Endothelial cell of umbilical vein (primary cell): ENCODE measurements at regions of chr22 and their contacts with region 1.

Region 1: DNA sequence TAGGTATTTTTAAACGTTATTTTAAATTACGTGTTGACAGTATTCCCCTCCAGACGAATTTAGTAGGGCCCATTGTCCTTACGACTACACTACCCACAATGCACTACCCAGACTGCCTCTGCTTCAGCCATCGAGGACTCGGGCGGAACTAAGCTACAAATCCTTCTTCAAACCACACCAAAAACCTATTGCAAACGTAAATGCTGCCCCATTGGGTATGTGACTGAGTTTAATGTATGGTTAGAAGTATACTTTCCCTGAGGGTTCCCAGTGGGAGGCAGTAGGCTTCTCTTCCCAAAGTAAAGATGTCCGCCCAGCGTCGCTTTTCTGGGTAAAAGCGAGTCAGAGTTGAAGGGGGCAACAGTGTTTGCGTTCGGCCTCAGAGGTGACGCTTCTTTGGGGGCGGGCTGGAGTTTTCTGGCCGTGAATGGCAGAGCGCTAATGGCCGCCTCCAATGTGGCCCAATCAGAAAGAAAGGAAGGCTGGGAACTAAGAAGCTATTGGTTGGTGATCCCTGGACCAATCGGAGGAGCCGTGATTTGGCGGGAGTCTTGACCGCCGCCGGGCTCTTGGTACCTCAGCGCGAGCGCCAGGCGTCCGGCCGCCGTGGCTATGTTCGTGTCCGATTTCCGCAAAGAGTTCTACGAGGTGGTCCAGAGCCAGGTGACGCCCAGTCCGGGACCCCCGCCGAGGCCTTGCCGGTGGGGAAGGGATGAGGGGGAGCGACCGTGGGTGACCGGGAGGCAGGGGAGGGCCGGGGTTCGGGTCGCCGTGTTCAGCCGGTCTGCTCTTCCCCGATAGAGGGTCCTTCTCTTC is at the start of gene CDC45:
- DNase-seq: peak; percentile 99
- H3K4me3 ChIP-seq: peak within 1 kb of the TSS; percentile 66 to 87 (median 83)
- H3K27ac ChIP-seq: peak within 1 kb of the TSS; percentile 100
- H3K4me1 ChIP-seq: peaks cover 48% of the 10 kb centered on the region
- H3K27me3 ChIP-seq: no peaks in the 10 kb centered on the region
- CTCF ChIP-seq: no peak
- POLR2A ChIP-seq: no peak
- total RNA-seq, gene CDC45: 40.6 and 44.7 TPM in 2 replicates

Region 2: DNA sequence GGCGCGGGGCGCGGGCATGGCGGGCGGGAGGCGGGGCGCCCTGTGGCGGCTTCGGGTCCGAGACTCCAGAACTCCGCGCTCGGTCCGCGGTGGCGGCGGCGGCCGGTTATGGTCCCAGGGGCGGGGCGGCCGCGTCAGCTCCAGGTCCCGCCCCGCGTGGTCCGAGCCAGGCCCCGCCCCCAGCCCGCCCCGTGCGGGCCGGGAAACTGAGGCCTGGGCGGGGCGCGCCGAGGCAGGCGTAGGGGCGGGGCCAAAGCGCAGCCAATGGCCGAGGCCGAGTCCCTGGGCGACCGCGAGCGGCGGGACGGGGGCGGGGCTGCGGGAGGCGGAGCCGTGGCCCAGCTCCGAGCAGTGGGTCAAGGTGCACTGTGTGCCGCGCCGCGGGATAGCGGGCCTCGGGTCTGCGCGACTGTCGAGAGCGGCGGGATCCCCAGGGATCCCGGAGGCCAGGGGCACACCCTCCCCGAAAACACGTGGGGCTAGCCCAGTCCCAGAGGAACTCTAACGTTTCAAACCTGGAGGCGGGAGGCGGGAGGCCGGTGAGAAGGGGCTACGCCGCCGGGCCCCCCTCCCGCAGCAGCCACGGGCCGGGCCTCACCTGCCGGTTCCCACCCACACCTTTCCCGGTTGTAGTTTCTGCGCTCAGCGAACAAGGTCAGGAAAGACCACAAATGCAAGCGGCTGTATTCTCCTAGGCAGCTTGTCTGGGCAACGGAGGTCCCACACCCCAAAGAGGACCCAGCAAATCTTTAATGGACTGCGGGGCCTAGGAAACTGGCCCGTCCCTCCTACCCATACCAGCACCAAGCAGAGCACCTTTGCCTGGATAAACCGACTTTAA is 300.7 kb before region 1 on chr22 and contains the start of gene SLC25A1:
- CTCF ChIA-PET with region 1: interaction called, 14 read pairs
- POLR2A ChIA-PET with region 1: no interaction called
- dilution Hi-C with region 1: no loop called
- intact Hi-C with region 1: loop called (anchors 1 kb)
- DNase-seq: peak; percentile 88
- H3K4me3 ChIP-seq: peak within 1 kb of the TSS; percentile 60 to 89 (median 68)
- H3K27ac ChIP-seq: peak within 1 kb of the TSS; percentile 56
- H3K4me1 ChIP-seq: peaks cover 7% of the 10 kb centered on the region
- H3K27me3 ChIP-seq: no peaks in the 10 kb centered on the region
- CTCF ChIP-seq: no peak
- POLR2A ChIP-seq: peak; percentile 31
- total RNA-seq, gene SLC25A1: 94.5 and 102 TPM in 2 replicates

Region 3: DNA sequence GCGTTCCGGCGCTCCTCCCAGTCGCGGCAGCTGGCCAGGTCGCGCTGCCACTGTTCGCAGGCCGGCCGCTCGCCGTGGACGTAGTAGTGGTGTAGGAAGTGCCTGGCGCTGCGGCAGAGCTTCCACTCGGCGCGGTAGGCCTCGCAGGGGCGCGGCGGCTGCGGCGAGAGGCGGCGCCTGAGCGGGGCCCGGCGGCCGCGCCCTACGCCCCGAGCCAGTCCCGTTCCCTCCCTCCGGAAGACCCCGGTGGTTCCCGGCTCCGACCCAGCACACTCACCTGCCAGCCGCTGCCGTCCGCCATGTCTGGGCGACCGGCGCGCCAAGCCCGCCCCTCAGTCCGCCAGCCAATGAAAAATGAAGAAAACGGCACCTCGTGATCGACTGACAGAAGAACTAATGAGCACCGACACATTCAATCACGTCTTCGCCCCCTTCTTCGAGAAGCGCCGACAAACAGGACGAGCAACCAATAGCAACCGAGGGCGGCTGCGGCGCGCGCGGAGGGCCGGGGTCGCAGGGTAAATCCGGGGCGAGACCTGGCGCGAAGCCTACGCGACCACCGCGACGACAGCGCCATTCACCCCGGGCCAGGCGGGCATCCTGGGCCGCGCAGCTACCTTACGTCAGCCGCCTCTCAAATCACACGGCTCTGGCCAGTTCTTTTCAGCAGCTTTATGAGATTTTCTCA is 32.0 kb before region 1 on chr22 and contains the start of gene C22orf39:
- CTCF ChIA-PET with region 1: interaction called, 4 read pairs
- POLR2A ChIA-PET with region 1: no interaction called
- dilution Hi-C with region 1: no loop called
- intact Hi-C with region 1: loop called (anchors 2 kb)
- DNase-seq: peak; percentile 94
- H3K4me3 ChIP-seq: peak within 1 kb of the TSS; percentile 80 to 92 (median 89)
- H3K27ac ChIP-seq: peak within 1 kb of the TSS; percentile 49
- H3K4me1 ChIP-seq: peaks cover 11% of the 10 kb centered on the region
- H3K27me3 ChIP-seq: no peaks in the 10 kb centered on the region
- CTCF ChIP-seq: no peak
- POLR2A ChIP-seq: peak; percentile 77
- total RNA-seq, gene C22orf39: 25.0 and 26.1 TPM in 2 replicates

Region 4: DNA sequence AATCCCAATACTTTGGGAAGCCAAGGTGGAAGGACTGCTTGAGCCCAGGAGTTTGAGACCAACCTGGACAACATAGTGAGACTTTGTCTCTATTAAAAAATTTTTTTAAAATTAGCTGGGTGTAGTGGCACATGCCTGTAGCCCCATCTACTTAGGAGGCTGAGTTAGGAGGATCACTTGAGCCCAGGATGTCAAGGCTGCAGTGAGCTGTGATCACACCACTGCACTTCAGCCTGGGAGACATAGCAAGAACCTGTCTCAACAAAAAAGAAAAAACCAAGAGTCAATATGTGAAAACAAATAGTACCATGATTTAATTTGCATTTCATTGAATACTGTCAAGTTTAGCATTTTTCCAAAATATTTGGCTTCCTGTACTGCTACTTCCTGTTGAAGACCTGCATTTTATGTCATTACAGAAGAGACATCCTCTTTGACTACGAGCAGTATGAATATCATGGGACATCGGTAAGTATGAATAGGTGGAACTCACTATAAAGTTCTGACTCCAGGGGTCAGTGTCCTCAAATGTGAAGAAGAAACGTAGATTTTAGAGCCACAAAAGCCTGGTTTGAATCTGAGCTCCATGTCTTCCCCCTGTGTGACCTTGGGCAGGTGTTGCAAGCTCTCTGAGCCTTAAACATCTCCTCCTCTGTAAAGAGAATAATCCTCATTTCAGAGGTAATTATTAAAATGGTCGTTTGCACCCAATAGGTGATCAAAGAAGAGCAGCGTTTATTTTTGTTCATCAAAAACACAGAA is 16.2 kb after region 1 on chr22:
- CTCF ChIA-PET with region 1: interaction called, 16 read pairs
- POLR2A ChIA-PET with region 1: no interaction called
- dilution Hi-C with region 1: no loop called
- intact Hi-C with region 1: no loop called
- DNase-seq: peak; percentile 69
- H3K4me3 ChIP-seq: no peak overlapping the region
- H3K27ac ChIP-seq: no peak overlapping the region
- H3K4me1 ChIP-seq: no peaks in the 10 kb centered on the region
- H3K27me3 ChIP-seq: no peaks in the 10 kb centered on the region
- CTCF ChIP-seq: peak; percentile 24 to 37
- POLR2A ChIP-seq: no peak

Region 5: GRCh38 chr22:19510919-19511341 is 31.4 kb after region 1 on chr22:
- CTCF ChIA-PET with region 1: no interaction called
- POLR2A ChIA-PET with region 1: no interaction called
- dilution Hi-C with region 1: no loop called
- intact Hi-C with region 1: no loop called
- DNase-seq: no peak
- H3K4me3 ChIP-seq: no peak overlapping the region
- H3K27ac ChIP-seq: no peak overlapping the region
- H3K4me1 ChIP-seq: no peaks in the 10 kb centered on the region
- H3K27me3 ChIP-seq: no peaks in the 10 kb centered on the region
- CTCF ChIP-seq: no peak
- POLR2A ChIP-seq: no peak

Region 6: GRCh38 chr22:19568337-19569275 is 89.0 kb after region 1 on chr22:
- CTCF ChIA-PET with region 1: no interaction called
- POLR2A ChIA-PET with region 1: no interaction called
- dilution Hi-C with region 1: no loop called
- intact Hi-C with region 1: loop called (anchors 1 kb)
- DNase-seq: peak; percentile 45
- H3K4me3 ChIP-seq: no peak overlapping the region
- H3K27ac ChIP-seq: peak overlapping the region; percentile 88
- H3K4me1 ChIP-seq: peaks cover 50% of the 10 kb centered on the region
- H3K27me3 ChIP-seq: no peaks in the 10 kb centered on the region
- CTCF ChIP-seq: no peak
- POLR2A ChIP-seq: no peak